Activated B cell treated with CpG ODN at 0.5 μM for 24 hours (primary cell): ENCODE measurements at regions of chr7 and their contacts with region 1.

Region 1: DNA sequence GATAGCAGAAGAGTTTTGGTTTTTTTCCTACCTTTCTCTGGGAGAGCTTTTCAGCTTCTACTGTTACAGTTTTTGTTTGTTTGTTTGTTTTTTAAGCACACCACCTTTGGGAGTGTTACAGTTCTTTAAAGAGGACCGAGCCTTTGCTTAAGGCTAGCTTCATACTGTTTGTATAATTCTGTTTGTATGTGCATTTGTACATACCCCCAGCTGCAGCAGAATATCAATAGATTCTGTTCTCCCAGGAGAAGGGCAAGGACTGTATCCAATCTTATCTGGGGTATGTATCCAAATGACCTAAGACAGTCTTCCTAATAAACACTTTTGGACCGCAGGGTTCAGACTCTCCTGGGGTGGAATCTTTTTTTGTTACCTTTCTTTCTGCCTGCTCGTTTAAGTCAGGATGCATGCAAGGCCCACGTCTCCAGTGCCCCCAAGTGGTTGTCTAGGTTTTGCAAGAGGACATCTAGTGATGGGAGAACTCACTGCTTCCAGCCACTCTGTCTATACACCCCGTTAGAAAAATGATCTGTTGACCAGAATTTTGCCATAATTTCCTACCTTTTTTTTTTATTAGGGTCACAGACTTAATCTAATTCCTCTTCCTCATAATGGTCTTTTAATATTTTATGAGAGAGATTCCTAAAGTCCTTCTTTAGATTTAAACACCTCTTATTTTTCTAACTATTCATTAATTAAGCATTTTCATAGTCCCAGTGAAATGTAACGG is 23.9 kb downstream of the NRF1 start:
- DNase-seq: peak; percentile 22
- ATAC-seq: peak; percentile 88
- H3K4me3 Mint-ChIP-seq: no peak overlapping the region
- H3K27ac Mint-ChIP-seq: no peak overlapping the region
- H3K4me1 Mint-ChIP-seq: peaks cover 16% of the 10 kb centered on the region
- H3K27me3 Mint-ChIP-seq: no peaks in the 10 kb centered on the region
- CTCF ChIP-seq: peak; percentile 22

Region 2: GRCh38 chr7:129367700-129368388 is 267.6 kb before region 1 on chr7:
- CTCF ChIA-PET with region 1: interaction called, 17 read pairs
- POLR2A ChIA-PET with region 1: no interaction called
- intact Hi-C with region 1: loop called (anchors 1 kb)
- DNase-seq: peak; percentile 50
- ATAC-seq: peak; percentile 85
- H3K4me3 Mint-ChIP-seq: peak overlapping the region; percentile 61
- H3K27ac Mint-ChIP-seq: peak overlapping the region; percentile 46
- H3K4me1 Mint-ChIP-seq: peaks cover 27% of the 10 kb centered on the region
- H3K27me3 Mint-ChIP-seq: no peaks in the 10 kb centered on the region
- CTCF ChIP-seq: no peak

Region 3: DNA sequence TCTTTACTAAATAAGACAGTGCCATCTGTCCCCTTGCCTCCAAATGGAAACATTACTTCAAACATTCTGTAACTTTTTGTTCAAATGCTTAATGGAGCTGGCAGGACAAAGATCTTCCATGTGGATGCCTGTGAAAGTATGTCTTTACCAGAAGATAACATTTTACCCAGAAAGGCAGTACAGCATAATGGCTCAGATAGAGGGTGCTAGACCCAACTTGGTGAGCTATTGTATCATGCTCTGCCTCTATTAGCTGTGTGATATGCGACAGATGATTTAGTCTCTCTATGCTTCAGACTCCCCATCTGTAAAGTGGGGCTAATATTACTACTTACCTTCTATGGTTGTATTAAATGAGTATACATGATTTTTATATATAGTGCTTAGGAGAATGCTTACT is 141.9 kb before region 1 on chr7:
- CTCF ChIA-PET with region 1: interaction called, 3 read pairs
- POLR2A ChIA-PET with region 1: no interaction called
- intact Hi-C with region 1: loop called (anchors 1 kb)
- DNase-seq: no peak
- ATAC-seq: peak; percentile 54
- H3K4me3 Mint-ChIP-seq: peak overlapping the region; percentile 28
- H3K27ac Mint-ChIP-seq: peak overlapping the region; percentile 77
- H3K4me1 Mint-ChIP-seq: peaks cover 19% of the 10 kb centered on the region
- H3K27me3 Mint-ChIP-seq: no peaks in the 10 kb centered on the region
- CTCF ChIP-seq: no peak

Region 4: GRCh38 chr7:129578829-129579228 is 56.6 kb before region 1 on chr7:
- CTCF ChIA-PET with region 1: interaction called, 4 read pairs
- POLR2A ChIA-PET with region 1: no interaction called
- intact Hi-C with region 1: loop called (anchors 1 kb)
- DNase-seq: no peak
- ATAC-seq: no peak
- H3K4me3 Mint-ChIP-seq: no peak overlapping the region
- H3K27ac Mint-ChIP-seq: no peak overlapping the region
- H3K4me1 Mint-ChIP-seq: no peaks in the 10 kb centered on the region
- H3K27me3 Mint-ChIP-seq: no peaks in the 10 kb centered on the region
- CTCF ChIP-seq: no peak

Region 5: GRCh38 chr7:129611246-129612111 is 24.0 kb before region 1 on chr7 and contains the start of gene NRF1:
- CTCF ChIA-PET with region 1: interaction called, 10 read pairs
- POLR2A ChIA-PET with region 1: interaction called, 8 read pairs
- intact Hi-C with region 1: loop called (anchors 1 kb)
- DNase-seq: peak; percentile 95
- ATAC-seq: peak; percentile 89
- H3K4me3 Mint-ChIP-seq: peak within 1 kb of the TSS; percentile 91
- H3K27ac Mint-ChIP-seq: peak within 1 kb of the TSS; percentile 92
- H3K4me1 Mint-ChIP-seq: peaks cover 58% of the 10 kb centered on the region
- H3K27me3 Mint-ChIP-seq: no peaks in the 10 kb centered on the region
- CTCF ChIP-seq: no peak
- total RNA-seq, gene NRF1: 27.4 and 29.8 TPM in 2 replicates

Region 6: GRCh38 chr7:129721068-129721467 is 85.6 kb after region 1 on chr7:
- CTCF ChIA-PET with region 1: no interaction called
- POLR2A ChIA-PET with region 1: no interaction called
- intact Hi-C with region 1: no loop called
- DNase-seq: no peak
- ATAC-seq: no peak
- H3K4me3 Mint-ChIP-seq: no peak overlapping the region
- H3K27ac Mint-ChIP-seq: no peak overlapping the region
- H3K4me1 Mint-ChIP-seq: no peaks in the 10 kb centered on the region
- H3K27me3 Mint-ChIP-seq: no peaks in the 10 kb centered on the region
- CTCF ChIP-seq: no peak

Region 7: DNA sequence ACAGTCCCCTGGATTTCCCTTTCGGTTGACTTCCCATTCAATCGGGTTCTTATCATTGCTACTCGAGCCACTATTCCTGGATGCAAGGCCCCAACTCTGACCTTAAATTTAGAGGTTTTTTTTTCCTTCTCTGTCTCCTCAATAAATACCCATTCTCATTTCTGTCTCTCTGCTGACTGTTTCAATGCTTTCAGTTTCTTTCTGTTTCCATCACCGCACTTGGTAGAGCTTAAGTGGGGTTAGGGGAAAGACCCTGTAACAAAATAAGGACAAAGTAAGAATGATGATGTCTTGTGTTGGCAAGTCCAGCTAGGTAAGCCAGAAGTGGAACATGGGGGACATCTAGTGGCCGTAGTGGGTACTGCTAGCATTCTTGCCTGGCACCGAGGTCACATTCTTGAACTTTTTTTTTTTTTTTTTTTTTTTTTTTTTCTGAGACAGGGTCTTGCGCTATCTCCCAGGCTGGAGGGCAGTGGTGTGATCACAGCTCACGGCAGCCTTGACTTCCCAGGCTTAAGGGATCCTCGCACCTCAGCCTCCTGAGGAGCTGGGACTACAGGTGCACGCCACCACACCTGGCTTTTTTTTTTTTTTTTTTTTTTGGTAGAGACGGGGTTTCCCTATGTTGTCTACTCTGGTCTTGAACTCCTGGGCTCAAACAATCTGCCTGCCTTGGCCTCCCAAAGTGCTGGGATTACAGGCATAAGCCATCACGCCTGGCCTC is 375.4 kb after region 1 on chr7:
- CTCF ChIA-PET with region 1: no interaction called
- POLR2A ChIA-PET with region 1: no interaction called
- intact Hi-C with region 1: loop called (anchors 2 kb)
- DNase-seq: peak; percentile 74
- ATAC-seq: peak; percentile 91
- H3K4me3 Mint-ChIP-seq: no peak overlapping the region
- H3K27ac Mint-ChIP-seq: no peak overlapping the region
- H3K4me1 Mint-ChIP-seq: peaks cover 9% of the 10 kb centered on the region
- H3K27me3 Mint-ChIP-seq: no peaks in the 10 kb centered on the region
- CTCF ChIP-seq: peak; percentile 51

Region 8: DNA sequence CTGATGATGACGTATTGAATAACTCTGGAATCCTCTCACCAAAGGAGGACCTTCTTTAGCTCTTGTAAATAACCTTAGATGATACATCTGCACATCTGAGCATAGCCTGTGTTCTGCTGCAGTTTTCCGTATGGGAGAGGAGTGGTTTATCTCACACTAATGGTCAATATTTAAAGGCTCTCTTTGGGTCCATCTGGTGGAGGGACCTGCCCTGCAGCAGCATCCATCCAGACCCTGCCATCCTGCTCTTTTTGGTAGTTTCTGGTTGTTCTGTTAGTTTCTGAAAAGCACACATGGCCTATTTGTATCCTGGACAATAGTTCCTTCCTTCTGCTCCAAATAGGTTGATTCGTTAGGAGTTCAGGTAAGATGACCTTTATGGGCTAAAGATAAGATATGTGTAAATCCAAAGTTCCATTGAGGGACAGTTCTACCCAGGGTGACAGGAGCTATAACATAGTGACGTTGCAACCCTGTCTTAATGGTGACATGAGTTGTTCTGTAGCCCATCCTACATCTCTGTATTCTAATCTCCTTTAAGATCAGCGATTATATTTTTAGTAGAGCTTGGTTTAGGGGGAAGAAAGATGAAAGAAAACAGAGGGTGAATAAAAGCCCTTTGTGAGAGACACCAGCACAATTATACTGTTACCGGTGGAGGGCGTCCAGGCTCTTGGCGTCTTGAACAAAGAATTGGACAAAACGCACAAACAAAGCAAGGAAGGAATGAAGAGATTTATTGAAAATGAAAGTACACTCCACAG is 1158.6 kb after region 1 on chr7:
- CTCF ChIA-PET with region 1: no interaction called
- POLR2A ChIA-PET with region 1: no interaction called
- intact Hi-C with region 1: no loop called
- DNase-seq: no peak
- ATAC-seq: no peak
- H3K4me3 Mint-ChIP-seq: no peak overlapping the region
- H3K27ac Mint-ChIP-seq: no peak overlapping the region
- H3K4me1 Mint-ChIP-seq: no peaks in the 10 kb centered on the region
- H3K27me3 Mint-ChIP-seq: peaks cover 11% of the 10 kb centered on the region
- CTCF ChIP-seq: no peak